Activated naive CD4-positive, alpha-beta T cell treated with anti-CD3 and anti-CD28 coated beads for 36 hours (primary cell): ENCODE measurements at regions of chr1 and their contacts with region 1.

Region 1: DNA sequence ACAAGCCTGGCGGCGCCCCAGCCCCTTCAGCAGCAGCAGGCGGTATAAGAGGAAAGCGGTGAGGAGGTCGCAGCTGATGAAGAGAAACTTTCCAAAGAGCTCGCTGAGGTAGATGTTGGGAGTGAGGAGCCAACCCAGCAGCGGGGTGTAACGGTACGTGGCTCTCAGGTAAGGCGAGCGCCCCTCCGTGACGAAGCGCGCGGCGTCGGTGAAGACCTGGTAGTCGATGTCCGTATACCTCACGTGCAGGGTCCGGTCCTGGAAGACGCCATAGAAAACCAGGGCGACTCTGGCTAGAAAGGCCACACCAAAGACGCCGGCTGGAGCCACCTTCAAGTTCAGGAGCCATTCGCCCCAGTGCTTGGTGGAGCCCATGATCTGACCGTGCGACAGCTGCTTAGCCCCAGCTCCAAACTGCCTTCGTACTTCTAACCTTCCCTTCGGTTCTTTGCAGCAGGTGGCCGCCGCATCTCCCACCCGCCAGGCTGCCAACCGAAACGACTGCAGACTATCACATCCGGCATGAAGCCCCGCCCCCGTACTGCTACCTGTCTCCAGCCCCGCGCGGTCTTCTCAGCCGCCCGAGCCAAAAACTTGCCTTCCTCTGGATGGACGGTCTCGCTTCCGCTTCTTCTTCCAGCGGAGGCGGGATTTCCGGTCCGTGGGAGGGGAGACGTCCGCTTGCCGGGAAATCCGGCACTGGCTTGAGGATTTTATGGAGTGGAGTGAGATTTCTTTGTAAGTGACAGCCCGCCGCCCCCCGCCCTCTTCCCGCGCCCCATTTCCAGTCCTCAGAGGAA is at the start of gene PIGM:
- DNase-seq: peak; percentile 98
- H3K4me3 Mint-ChIP-seq: peak within 1 kb of the TSS; percentile 93
- H3K27ac Mint-ChIP-seq: peak within 1 kb of the TSS; percentile 87
- H3K4me1 Mint-ChIP-seq: peaks cover 25% of the 10 kb centered on the region
- H3K27me3 Mint-ChIP-seq: no peaks in the 10 kb centered on the region
- total RNA-seq, gene PIGM: 2.6 TPM

Region 2: GRCh38 chr1:159015440-159015909 is 1016.1 kb before region 1 on chr1:
- CTCF ChIA-PET with region 1: no interaction called
- intact Hi-C with region 1: loop called (anchors 2 kb)
- DNase-seq: peak; percentile 84
- H3K4me3 Mint-ChIP-seq: peak overlapping the region; percentile 91
- H3K27ac Mint-ChIP-seq: peak overlapping the region; percentile 99
- H3K4me1 Mint-ChIP-seq: peaks cover 42% of the 10 kb centered on the region
- H3K27me3 Mint-ChIP-seq: no peaks in the 10 kb centered on the region

Region 3: DNA sequence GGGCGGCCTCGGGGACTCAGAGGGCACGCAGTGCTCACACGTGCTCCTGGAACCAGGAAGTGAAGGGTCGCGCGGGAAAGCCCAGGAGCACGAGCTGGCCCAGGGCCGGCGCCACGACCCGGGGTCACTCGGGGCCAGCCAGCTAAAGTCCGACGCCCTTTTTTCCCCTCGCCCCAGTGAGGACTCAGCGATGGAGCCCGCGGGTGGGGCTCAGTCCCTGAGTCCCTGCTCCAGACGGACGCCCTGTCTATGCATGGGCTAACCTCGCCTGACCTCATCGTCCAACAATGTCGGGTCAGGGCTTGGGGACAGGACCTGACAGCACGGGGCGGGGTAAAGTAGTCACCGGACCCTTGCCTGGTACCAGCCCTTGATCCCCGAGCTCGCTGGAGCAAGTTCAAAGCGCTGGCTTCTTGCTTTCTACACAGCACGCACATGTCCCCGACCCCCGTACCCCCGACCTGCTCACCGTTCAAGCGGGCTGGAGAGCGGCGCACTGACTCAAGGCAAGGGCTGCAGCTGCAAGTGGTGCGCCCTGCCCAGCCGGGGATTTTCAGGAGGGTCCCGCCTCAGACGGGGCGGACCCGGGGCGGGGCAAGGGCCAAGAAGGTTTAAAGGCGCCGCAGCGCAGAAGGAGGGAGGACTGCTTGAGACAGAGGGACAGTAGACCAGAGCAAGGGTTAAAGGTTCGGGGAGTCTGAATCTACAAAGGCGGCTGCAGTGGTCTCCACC is 106.4 kb before region 1 on chr1 and contains the start of gene TAGLN2:
- CTCF ChIA-PET with region 1: interaction called, 3 read pairs
- intact Hi-C with region 1: loop called (anchors 1 kb)
- DNase-seq: peak; percentile 89
- H3K4me3 Mint-ChIP-seq: peak within 1 kb of the TSS; percentile 91
- H3K27ac Mint-ChIP-seq: peak within 1 kb of the TSS; percentile 93
- H3K4me1 Mint-ChIP-seq: peaks cover 42% of the 10 kb centered on the region
- H3K27me3 Mint-ChIP-seq: no peaks in the 10 kb centered on the region
- total RNA-seq, gene TAGLN2: 453 to 454 TPM

Region 4: DNA sequence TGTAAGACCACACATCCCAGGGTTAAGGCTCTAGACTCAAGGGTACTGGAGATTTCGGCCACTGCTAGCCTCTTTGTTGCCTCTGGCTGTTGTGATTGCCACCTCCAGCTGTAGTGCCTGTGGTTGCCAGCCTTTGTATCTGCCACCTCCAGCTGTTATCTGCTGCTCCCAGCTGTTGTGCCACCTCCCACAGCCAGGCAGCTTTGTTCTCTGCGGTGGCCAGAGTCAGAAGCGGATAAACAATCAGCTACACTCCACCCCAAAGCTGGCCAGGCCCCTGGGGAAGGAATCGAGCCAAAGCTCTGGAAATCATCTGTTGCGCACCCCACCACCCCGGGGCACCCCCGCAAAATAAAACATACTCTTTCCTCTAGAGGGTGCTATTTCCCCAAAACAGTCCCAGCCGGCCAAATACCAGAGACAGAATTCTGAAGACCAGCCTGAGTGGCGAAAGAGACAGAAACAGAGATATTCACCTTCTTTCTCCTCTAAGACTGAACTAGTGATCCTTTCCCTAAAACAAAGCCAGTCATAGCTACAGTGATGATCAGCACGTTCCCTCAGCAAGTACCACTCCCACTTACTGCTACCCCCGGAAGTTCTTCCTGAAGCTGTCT is 15.0 kb after region 1 on chr1:
- CTCF ChIA-PET with region 1: interaction called, 45 read pairs
- intact Hi-C with region 1: no loop called
- DNase-seq: peak; percentile 56
- H3K4me3 Mint-ChIP-seq: peak overlapping the region; percentile 45
- H3K27ac Mint-ChIP-seq: no peak overlapping the region
- H3K4me1 Mint-ChIP-seq: peaks cover 9% of the 10 kb centered on the region
- H3K27me3 Mint-ChIP-seq: peaks cover 4% of the 10 kb centered on the region

Region 5: GRCh38 chr1:160078512-160079195 is 47.1 kb after region 1 on chr1:
- CTCF ChIA-PET with region 1: interaction called, 565 read pairs
- intact Hi-C with region 1: no loop called
- DNase-seq: peak; percentile 77
- H3K4me3 Mint-ChIP-seq: no peak overlapping the region
- H3K27ac Mint-ChIP-seq: no peak overlapping the region
- H3K4me1 Mint-ChIP-seq: no peaks in the 10 kb centered on the region
- H3K27me3 Mint-ChIP-seq: peaks cover 40% of the 10 kb centered on the region

Region 6: GRCh38 chr1:160342953-160343869 is 311.6 kb after region 1 on chr1 and contains the starts of genes COPA and NCSTN:
- CTCF ChIA-PET with region 1: no interaction called
- intact Hi-C with region 1: loop called (anchors 1 kb)
- DNase-seq: peak; percentile 95
- H3K4me3 Mint-ChIP-seq: peak within 1 kb of the TSS; percentile 99
- H3K27ac Mint-ChIP-seq: peak within 1 kb of the TSS; percentile 98
- H3K4me1 Mint-ChIP-seq: peaks cover 43% of the 10 kb centered on the region
- H3K27me3 Mint-ChIP-seq: no peaks in the 10 kb centered on the region
- total RNA-seq, gene COPA: 97.8 to 101 TPM
- total RNA-seq, gene NCSTN: 27.4 to 29.4 TPM